RWPE1 (cell line): ENCODE measurements at regions of chr4 and their contacts with region 1.

Region 1: DNA sequence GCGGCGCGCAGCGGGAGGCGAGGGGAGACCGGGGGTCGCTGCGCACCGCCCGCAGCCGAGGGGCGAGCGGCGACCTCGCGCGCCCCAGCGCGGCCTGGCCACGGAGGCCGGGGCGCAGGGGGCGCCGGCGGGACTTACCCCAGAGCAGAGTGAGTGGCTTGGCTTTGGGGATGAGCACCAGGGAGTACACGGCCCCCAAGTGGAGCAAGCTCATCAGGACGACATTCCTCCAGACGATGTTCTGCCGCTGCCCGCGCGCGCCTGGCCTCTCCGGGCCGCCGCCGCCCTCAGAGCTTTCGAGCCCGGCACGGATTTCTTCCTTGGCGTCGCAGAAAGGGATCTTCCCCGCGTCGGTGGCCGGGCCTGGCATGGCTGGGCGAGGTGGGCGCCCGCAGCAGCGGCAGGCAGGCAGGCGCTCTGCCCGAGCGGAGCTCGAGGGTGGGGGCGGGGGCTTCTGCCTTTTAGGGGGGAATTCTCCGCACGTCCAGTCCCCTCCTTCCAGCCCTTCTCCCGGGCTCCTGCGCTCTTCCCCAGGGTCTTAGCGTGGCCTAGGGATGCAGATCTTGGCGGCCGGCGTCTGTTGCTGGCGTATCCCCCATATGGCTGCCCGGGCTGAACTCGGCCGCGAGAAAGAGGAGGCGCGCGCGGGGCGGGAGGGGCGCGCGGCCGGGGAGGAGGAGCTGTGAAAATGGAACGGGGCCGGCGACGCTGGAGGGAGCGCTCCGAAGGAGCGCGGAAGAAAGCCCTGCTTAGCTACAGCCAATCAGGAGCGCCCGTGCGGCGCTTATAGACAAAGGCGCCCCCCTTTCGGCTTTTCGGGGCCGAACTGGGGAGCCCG is at the start of gene SCD5:
- DNase-seq: peak; percentile 73
- H3K27ac ChIP-seq: peak within 1 kb of the TSS; percentile 39; the same call in 1 of the 2 replicates
- CTCF ChIP-seq: no peak

Region 2: DNA sequence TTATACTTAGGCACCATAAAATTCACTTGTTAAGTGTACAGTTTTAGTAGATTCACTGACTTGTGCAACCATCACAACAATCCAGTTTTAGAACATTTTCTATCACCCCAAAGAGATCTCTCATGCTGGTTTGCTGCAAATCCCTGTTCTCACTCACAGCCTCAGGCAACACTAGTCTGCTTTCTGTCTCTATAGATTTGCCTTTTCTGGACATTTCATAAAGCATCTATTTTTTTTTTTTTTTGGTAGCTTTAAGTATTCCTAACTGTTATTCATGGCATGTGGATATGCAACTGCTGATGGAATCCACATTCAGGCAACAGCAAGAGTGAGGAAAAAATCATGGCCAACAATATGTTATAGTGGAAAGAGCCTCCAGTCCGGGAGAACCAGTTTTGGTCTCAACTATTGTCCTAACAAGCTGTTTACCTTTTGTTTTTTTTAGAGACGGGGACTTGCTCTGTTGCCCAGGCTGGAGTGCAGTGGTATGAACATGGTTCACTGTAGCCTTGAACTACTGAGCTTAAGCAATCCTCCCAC is 209.5 kb before region 1 on chr4:
- CTCF ChIA-PET with region 1: no interaction called
- POLR2A ChIA-PET with region 1: no interaction called
- DNase-seq: no peak
- H3K27ac ChIP-seq: no peak overlapping the region
- CTCF ChIP-seq: no peak

Region 3: GRCh38 chr4:82721819-82722423 is 76.5 kb before region 1 on chr4:
- CTCF ChIA-PET with region 1: interaction called, 33 read pairs
- POLR2A ChIA-PET with region 1: no interaction called
- DNase-seq: peak; percentile 21
- H3K27ac ChIP-seq: no peak overlapping the region
- CTCF ChIP-seq: peak; percentile 62

Region 4: GRCh38 chr4:83297548-83298260 is 499.3 kb after region 1 on chr4:
- CTCF ChIA-PET with region 1: no interaction called
- POLR2A ChIA-PET with region 1: no interaction called
- DNase-seq: no peak
- H3K27ac ChIP-seq: no peak overlapping the region
- CTCF ChIP-seq: no peak